ENCODE measurements at regions of chr21 and their contacts with region 1.

Region 1: GRCh38 chr21:42454786-42455580 is 41.0 kb downstream of the RSPH1 start:
- DNase-seq: no peak
- ATAC-seq: no peak
- H3K4me3 ChIP-seq: no peak overlapping the region
- H3K27ac ChIP-seq: no peak overlapping the region
- H3K4me1 ChIP-seq: peaks cover 0 to 7% (median 0%) of the 10 kb centered on the region in 9 donors
- H3K27me3 ChIP-seq: peaks cover 0 to 16% (median 3%) of the 10 kb centered on the region in 7 donors
- CTCF ChIP-seq: no peak

Region 2: DNA sequence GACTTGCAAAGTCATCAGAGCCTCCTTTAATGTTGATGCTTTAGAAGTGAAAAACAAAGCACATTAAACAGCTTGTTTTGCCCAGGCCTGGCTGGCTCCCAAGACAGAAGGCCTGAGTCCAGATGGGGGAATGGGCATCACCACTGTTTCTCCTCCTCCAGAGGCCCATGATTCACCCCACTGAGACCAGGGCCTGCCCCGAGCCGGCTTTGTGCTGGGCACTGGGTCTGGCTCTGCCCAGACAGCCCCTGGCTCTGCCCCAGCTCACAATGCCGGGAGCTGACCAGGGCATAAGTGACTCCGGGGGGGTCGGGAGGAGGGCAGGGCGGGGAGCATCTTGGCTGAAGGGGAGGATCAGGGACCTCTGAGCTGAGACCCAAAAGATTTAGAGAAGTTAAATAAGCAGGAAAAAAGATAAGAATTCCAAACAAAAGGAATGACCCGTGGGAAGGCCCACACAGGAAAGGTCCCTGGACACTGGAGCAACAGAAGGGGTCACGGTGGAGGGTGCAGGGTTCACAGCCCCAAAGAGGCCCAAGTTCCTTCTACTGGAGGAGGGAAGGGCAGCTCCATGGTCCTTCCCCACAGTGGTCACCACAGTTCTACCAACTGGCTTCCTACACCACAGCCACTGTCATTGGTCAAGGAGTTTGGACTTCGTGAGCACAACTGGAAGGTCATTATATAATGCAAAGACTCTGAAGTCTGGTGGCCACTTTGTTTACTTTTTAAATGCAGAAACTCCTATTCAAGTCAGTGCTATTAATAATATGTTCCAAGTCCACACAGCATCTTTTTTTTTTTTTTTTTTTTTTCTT is 506.7 kb before region 1 on chr21:
- intact Hi-C with region 1: no loop called
- DNase-seq: no peak
- ATAC-seq: peak in 7 of 8 donors; percentile 28 to 57 (median 36)
- H3K4me3 ChIP-seq: no peak overlapping the region
- H3K27ac ChIP-seq: peak overlapping the region in 1 of 10 donors; percentile 34
- H3K4me1 ChIP-seq: peaks cover 10 to 58% (median 29%) of the 10 kb centered on the region in 9 donors
- H3K27me3 ChIP-seq: peaks cover 0 to 8% (median 0%) of the 10 kb centered on the region in 7 donors
- CTCF ChIP-seq: no peak

Region 3: DNA sequence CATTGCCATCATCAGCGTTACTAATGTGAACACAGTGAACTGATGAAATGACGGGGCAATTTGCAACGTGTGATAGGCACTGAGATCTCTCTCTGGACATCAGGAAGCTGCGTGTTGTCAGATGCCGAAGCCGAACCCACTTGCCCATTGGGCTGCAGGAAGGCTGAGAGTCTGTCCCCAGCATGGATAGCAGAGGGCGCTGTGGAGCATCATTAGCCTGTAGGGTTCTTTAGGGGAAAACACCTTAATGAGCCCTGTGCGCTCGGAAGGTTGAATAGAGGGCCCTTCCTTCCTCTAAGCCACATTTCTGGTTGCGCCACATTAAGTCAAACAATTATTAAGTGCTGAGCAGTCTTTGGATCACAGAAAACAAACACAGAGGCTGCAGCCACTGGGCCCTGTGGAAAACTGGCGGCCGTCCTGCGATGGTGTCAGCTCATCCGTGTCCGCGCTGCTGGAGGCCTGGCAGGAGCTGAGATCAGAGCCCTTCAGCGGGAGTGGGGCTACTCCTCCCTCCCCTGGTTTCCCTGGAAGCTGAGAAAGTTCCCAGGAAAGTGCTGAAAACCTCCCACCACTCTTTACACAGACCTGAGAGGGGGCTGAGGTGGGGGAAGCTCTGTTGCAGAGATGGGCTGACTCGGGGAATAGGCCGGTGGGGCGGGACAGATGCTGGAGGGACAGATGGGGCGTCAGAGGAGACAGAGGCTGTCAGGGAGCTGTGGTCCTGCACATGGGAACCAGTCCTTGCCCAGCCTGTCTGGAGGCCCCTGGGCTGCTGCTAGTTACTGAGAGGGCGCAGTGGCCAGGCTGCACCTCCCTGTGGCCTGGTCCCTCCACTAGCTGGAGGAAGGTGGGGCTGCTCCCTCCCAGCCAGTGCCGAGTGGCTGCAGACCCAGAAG is 116.9 kb before region 1 on chr21:
- intact Hi-C with region 1: loop called in 1 of 10 experiments (anchors 5 kb)
- DNase-seq: peak; percentile 50 to 53
- ATAC-seq: peak; percentile 33 to 86 (median 76)
- H3K4me3 ChIP-seq: no peak overlapping the region
- H3K27ac ChIP-seq: no peak overlapping the region
- H3K4me1 ChIP-seq: peaks cover 0 to 7% (median 0%) of the 10 kb centered on the region in 9 donors
- H3K27me3 ChIP-seq: peaks cover 0 to 42% (median 23%) of the 10 kb centered on the region in 7 donors
- CTCF ChIP-seq: peak; percentile 18 to 73 (median 60)

Measured in heart right ventricle (tissue), 16 donors.